ENCODE measurements at regions of chr2 and their contacts with region 1.

Region 1: DNA sequence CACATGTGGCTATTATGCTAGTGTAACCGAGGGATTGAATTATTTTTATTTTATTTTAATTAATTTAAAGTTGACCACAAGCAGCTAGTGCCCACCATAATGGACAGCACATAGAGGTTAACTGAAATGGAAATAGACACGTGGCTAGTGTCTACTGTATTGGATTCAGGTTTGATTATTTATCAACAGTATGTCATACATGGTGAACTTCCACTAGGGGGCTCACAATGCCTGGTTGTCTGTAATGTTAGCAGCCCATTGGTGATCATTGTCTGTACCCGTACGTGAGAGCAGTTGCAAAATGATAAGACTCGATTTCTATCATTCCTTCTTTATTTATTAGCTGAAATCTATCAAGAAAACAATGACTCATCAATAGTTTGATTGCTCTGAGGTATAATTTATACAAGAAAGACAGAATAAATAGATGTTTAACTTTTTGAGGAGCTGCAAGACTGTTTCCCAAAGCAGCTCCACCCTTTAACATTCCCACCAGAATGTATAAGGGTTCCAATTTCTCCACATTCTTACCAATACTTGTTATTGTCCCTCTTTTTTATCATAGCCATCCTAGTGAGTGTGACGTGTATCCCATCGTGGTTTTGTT is 76.5 kb downstream of the CYBRD1 start:
- DNase-seq: peak; percentile 47
- H3K4me3 Mint-ChIP-seq: no peak overlapping the region
- H3K27ac Mint-ChIP-seq: no peak overlapping the region
- H3K4me1 Mint-ChIP-seq: no peaks in the 10 kb centered on the region
- H3K27me3 Mint-ChIP-seq: peaks cover 14% of the 10 kb centered on the region

Region 2: GRCh38 chr2:171574149-171574795 is 24.5 kb before region 1 on chr2:
- CTCF ChIA-PET with region 1: interaction called, 12 read pairs
- POLR2A ChIA-PET with region 1: no interaction called
- DNase-seq: peak; percentile 84
- H3K4me3 Mint-ChIP-seq: no peak overlapping the region
- H3K27ac Mint-ChIP-seq: no peak overlapping the region
- H3K4me1 Mint-ChIP-seq: peaks cover 8% of the 10 kb centered on the region
- H3K27me3 Mint-ChIP-seq: no peaks in the 10 kb centered on the region

Region 3: GRCh38 chr2:171798252-171798741 is 199.5 kb after region 1 on chr2:
- CTCF ChIA-PET with region 1: no interaction called
- POLR2A ChIA-PET with region 1: no interaction called
- DNase-seq: no peak
- H3K4me3 Mint-ChIP-seq: no peak overlapping the region
- H3K27ac Mint-ChIP-seq: peak overlapping the region; percentile 61
- H3K4me1 Mint-ChIP-seq: peaks cover 21% of the 10 kb centered on the region
- H3K27me3 Mint-ChIP-seq: no peaks in the 10 kb centered on the region